GM10248 (cell line): ENCODE measurements at regions of chr17 and their contacts with region 1.

Region 1: GRCh38 chr17:8832711-8833352 is 33.7 kb upstream of the MFSD6L start:
- DNase-seq: no peak
- CTCF ChIP-seq: peak; percentile 37

Region 2: DNA sequence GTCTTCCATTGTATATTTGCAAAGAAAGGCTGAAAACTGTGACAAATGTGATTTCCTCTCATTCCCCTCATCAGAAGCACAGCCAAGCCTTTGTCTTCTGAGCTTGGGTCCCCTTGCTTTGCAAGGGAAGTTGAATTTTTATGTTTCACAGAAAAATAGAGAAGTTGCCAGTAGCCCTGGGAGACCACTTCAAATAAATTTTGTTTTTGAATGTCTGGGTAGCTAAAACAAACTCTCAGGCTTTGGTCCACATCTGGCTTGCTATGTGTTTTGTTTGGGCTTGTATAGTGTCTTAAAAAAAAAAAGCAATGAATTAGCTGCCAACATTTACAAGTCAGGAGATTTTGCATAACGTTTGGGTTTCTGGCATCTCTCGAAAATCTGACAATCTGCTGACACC is 10.5 kb after region 1 on chr17:
- CTCF ChIA-PET with region 1: interaction called, 13 read pairs
- POLR2A ChIA-PET with region 1: no interaction called
- DNase-seq: no peak
- CTCF ChIP-seq: no peak

Region 3: DNA sequence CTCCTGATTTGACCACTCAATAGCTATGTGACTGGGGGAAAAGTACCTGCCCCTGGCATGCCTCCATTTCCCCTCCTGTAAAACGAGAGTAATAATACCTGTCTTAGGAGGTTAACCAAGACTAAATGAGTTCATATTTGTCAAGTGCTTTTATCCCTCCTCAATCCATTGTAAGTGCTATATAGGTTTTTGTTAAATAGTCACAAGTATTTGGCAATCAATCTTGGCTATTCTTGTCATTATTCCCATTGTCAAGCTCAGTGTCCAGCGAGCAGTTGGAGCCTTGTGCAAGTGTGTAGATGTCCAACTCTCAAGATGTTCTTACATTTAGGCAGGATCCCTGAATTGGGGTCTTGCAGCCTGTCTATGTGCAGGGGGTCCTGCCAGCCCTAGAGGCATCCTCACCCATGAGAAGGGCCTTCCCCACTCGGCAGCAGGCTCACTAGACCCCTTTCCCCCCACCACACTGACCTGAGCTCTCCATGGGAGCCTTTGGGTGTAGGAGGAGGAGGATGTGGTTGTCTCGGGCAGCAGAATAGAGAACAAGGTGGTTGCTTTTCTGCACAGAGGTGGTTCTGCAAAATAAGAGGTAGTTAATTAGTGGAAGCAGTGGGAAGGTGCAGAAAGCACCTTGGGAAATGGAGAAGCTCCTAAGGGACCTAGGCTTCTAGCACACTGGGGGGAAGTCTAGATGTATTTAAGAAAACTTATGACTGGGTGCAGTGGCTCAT is 16.6 kb after region 1 on chr17:
- CTCF ChIA-PET with region 1: interaction called, 13 read pairs
- POLR2A ChIA-PET with region 1: no interaction called
- DNase-seq: no peak
- CTCF ChIP-seq: no peak